Prostate gland (tissue), 2 donors: ENCODE measurements at regions of chr1 and their contacts with region 1.

Region 1: GRCh38 chr1:40849801-40850592 is 12.2 kb downstream of the CITED4 start:
- DNase-seq: peak; percentile 63
- H3K4me3 ChIP-seq: no peak overlapping the region
- H3K27ac ChIP-seq: no peak overlapping the region
- H3K4me1 ChIP-seq: no peaks in the 10 kb centered on the region
- H3K27me3 ChIP-seq: no peaks in the 10 kb centered on the region
- CTCF ChIP-seq: peak; percentile 74 to 90 (median 89)
- POLR2A ChIP-seq: no peak

Region 2: GRCh38 chr1:40612345-40612831 is 237.6 kb before region 1 on chr1:
- intact Hi-C with region 1: loop called (anchors 5 kb)
- DNase-seq: peak; percentile 59
- H3K4me3 ChIP-seq: no peak overlapping the region
- H3K27ac ChIP-seq: no peak overlapping the region
- H3K4me1 ChIP-seq: no peaks in the 10 kb centered on the region
- H3K27me3 ChIP-seq: no peaks in the 10 kb centered on the region
- CTCF ChIP-seq: peak in 3 of 4 experiments; percentile 51 to 73 (median 68)
- POLR2A ChIP-seq: no peak

Region 3: GRCh38 chr1:40774266-40774998 is 75.6 kb before region 1 on chr1:
- intact Hi-C with region 1: loop called (anchors 2 kb)
- DNase-seq: peak; percentile 47
- H3K4me3 ChIP-seq: no peak overlapping the region
- H3K27ac ChIP-seq: no peak overlapping the region
- H3K4me1 ChIP-seq: no peaks in the 10 kb centered on the region
- H3K27me3 ChIP-seq: no peaks in the 10 kb centered on the region
- CTCF ChIP-seq: peak; percentile 23 to 67 (median 54)
- POLR2A ChIP-seq: no peak

Region 4: GRCh38 chr1:40932018-40932417 is 82.0 kb after region 1 on chr1:
- intact Hi-C with region 1: no loop called
- DNase-seq: no peak
- H3K4me3 ChIP-seq: no peak overlapping the region
- H3K27ac ChIP-seq: no peak overlapping the region
- H3K4me1 ChIP-seq: peaks cover 4% of the 10 kb centered on the region
- H3K27me3 ChIP-seq: no peaks in the 10 kb centered on the region
- CTCF ChIP-seq: no peak
- POLR2A ChIP-seq: no peak

Region 5: DNA sequence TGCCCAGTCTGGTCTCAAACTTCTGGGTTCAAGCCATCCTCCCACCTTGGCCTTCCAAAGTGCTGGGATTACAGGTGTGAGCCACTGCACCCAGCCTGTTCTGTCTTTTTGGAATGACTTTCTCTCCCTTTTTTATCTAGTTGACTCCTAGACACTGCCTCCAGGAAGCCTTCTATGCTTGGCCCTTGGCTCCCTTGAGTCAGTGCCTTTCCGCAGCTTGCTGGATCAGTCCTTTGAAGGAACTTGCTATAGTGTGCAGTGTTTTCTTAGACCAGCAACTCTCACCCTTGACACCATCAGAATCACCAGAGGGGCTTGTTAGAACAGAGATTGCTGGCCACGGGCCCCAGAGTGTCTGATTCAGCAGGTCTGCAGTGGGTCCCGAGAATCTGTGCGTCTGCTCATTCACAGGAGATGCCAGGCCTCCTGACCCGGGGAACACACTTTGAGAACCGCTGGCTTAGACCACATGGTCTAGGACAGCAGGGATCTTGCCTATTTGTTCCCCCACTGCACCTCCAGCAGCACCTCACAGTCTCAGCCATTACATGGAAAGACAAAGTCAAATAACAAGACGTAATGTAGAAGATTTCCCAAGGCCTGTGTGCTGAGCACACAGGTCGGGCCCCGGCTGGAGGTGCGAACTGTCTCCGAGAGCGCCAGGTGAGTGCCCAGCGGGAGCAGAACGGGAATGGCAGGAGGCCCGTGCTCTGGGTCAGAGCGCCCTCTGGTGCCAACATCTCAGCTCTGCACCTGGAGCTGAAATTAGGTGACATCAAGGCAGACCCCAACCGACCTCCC is 102.1 kb after region 1 on chr1:
- intact Hi-C with region 1: loop called (anchors 2 kb)
- DNase-seq: peak; percentile 79
- H3K4me3 ChIP-seq: no peak overlapping the region
- H3K27ac ChIP-seq: no peak overlapping the region
- H3K4me1 ChIP-seq: no peaks in the 10 kb centered on the region
- H3K27me3 ChIP-seq: no peaks in the 10 kb centered on the region
- CTCF ChIP-seq: peak; percentile 89 to 97 (median 95)
- POLR2A ChIP-seq: no peak